CD8-positive, alpha-beta memory T cell (primary cell): ENCODE measurements at regions of chr3 and their contacts with region 1.

Region 1: GRCh38 chr3:195271116-195271858 is at the start of gene XXYLT1:
- DNase-seq: peak; percentile 82 to 91 (median 87)
- H3K4me3 ChIP-seq: peak within 1 kb of the TSS; percentile 85
- H3K4me3 Mint-ChIP-seq: peak within 1 kb of the TSS; percentile 86 to 96 (median 88)
- H3K27ac ChIP-seq: peak within 1 kb of the TSS; percentile 68
- H3K27ac Mint-ChIP-seq: peak within 1 kb of the TSS; percentile 58 to 95 (median 83)
- H3K4me1 ChIP-seq: peaks cover 18% of the 10 kb centered on the region
- H3K4me1 Mint-ChIP-seq: peaks cover 19 to 25% (median 25%) of the 10 kb centered on the region in 3 donors
- H3K27me3 ChIP-seq: no peaks in the 10 kb centered on the region
- H3K27me3 Mint-ChIP-seq: no peaks in the 10 kb centered on the region
- total RNA-seq, gene XXYLT1: 8.3 to 10.5 TPM

Region 2: DNA sequence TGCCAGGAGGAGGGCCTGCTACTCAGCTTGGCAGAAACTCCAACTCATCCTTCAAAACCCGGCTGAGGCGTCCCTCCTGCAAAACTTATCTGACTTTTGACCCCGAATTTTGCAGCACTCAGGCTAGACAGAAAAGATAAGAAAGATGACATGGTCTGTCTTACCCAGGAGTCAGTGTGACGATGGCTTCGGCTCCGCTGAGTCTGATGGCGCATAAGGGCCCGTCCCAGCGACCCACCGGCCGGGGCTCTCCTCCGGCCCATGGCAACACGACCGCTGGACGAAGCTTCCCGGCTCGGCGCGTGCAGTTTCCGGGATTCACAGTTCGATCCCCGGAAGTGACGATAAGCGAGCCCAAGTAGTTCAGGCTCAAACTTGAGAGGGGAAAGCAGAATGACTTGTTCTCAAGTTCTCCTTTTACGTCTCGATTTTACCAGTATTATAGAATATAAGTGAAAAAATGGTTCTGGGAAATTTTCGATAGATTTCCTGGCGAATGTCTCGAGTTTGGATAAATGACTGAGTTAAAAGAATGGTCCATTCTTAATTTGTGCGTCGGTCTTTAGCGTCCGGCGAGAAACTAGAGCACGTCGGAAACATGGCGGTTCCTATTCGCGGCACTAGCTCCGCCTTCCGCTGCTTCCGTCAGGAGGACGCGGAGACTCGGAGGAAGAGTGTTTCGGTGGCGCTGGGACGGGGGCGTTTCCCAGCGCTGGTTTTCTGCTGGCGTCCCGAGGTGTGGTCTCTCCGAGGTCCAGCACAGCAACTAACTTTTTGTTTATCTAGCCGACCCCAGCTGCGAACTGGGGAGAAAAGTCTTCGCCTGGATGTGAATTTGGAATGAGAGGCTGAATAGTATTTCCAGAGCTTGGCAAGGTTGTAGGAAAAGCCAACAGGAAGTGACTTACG is 599.1 kb before region 1 on chr3 and contains the start of gene LSG1:
- CTCF ChIA-PET with region 1: interaction called, 30 read pairs
- POLR2A ChIA-PET with region 1: interaction called, 4 read pairs
- DNase-seq: peak; percentile 80 to 92 (median 86)
- H3K4me3 ChIP-seq: peak within 1 kb of the TSS; percentile 86
- H3K4me3 Mint-ChIP-seq: peak within 1 kb of the TSS; percentile 94 to 99 (median 99)
- H3K27ac ChIP-seq: peak within 1 kb of the TSS; percentile 95
- H3K27ac Mint-ChIP-seq: peak within 1 kb of the TSS; percentile 91 to 99 (median 99)
- H3K4me1 ChIP-seq: peaks cover 19% of the 10 kb centered on the region
- H3K4me1 Mint-ChIP-seq: peaks cover 29 to 58% (median 55%) of the 10 kb centered on the region in 3 donors
- H3K27me3 ChIP-seq: no peaks in the 10 kb centered on the region
- H3K27me3 Mint-ChIP-seq: peaks cover 3 to 4% of the 10 kb centered on the region in 2 donors
- total RNA-seq, gene LSG1: 65.2 to 68.8 TPM

Region 3: GRCh38 chr3:195259475-195260279 is 11.6 kb before region 1 on chr3:
- CTCF ChIA-PET with region 1: interaction called, 54 read pairs
- POLR2A ChIA-PET with region 1: no interaction called
- DNase-seq: peak; percentile 88 to 95 (median 93)
- H3K4me3 ChIP-seq: no peak overlapping the region
- H3K4me3 Mint-ChIP-seq: peak overlapping the region; percentile 66 to 80 (median 75)
- H3K27ac ChIP-seq: peak overlapping the region; percentile 85
- H3K27ac Mint-ChIP-seq: peak overlapping the region; percentile 42 to 97 (median 93)
- H3K4me1 ChIP-seq: peaks cover 18% of the 10 kb centered on the region
- H3K4me1 Mint-ChIP-seq: peaks cover 11 to 23% (median 15%) of the 10 kb centered on the region in 3 donors
- H3K27me3 ChIP-seq: no peaks in the 10 kb centered on the region
- H3K27me3 Mint-ChIP-seq: no peaks in the 10 kb centered on the region

Region 4: DNA sequence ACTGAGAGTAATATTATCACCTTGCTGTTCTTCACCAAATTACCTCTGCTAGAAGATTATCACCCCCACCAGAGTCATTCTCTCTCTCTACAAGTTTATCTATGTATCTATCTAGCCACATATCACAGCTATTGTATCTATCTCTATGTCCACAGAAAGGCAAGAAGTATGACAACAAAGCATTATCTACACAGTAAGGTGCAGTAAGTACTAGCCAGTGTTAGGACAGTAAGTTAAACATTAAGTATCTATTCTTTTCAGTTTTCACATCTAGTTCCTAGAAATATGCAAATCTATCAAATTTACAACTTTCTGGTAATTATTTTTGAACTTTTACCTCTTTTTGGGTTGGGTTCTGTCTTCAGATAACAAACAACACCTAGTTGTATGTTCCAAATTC is 26.2 kb after region 1 on chr3:
- CTCF ChIA-PET with region 1: interaction called, 11 read pairs
- POLR2A ChIA-PET with region 1: no interaction called
- DNase-seq: no peak
- H3K4me3 ChIP-seq: no peak overlapping the region
- H3K4me3 Mint-ChIP-seq: no peak overlapping the region
- H3K27ac ChIP-seq: no peak overlapping the region
- H3K27ac Mint-ChIP-seq: peak overlapping the region in 6 of 8 donors; percentile 3 to 93 (median 63)
- H3K4me1 ChIP-seq: no peaks in the 10 kb centered on the region
- H3K4me1 Mint-ChIP-seq: peaks cover 3 to 9% (median 3%) of the 10 kb centered on the region in 3 donors
- H3K27me3 ChIP-seq: no peaks in the 10 kb centered on the region
- H3K27me3 Mint-ChIP-seq: no peaks in the 10 kb centered on the region

Region 5: DNA sequence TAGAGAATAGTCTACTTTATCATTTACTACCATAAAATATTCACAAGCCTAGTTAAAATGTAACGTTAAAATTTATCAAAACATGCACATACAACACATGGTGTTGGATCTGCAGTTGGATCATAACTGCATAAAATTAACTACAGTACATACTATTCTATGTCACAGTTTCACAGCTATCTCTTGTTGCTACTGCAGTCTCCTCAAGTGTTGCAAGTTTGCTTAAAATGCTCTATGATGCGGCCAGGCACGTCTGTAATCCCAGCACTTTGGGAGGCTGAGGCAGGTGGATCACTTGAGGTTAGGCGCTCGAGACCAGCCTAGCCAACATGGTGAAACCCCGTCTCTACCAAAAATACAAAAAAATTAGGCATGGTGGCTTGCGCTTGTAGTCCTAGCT is 261.5 kb after region 1 on chr3:
- CTCF ChIA-PET with region 1: interaction called, 13 read pairs
- POLR2A ChIA-PET with region 1: no interaction called
- DNase-seq: no peak
- H3K4me3 ChIP-seq: no peak overlapping the region
- H3K4me3 Mint-ChIP-seq: peak overlapping the region in 4 of 7 donors; percentile 13 to 70 (median 43)
- H3K27ac ChIP-seq: no peak overlapping the region
- H3K27ac Mint-ChIP-seq: peak overlapping the region in 5 of 8 donors; percentile 0 to 76 (median 47)
- H3K4me1 ChIP-seq: peaks cover 79% of the 10 kb centered on the region
- H3K4me1 Mint-ChIP-seq: peaks cover 75 to 94% (median 88%) of the 10 kb centered on the region in 3 donors
- H3K27me3 ChIP-seq: no peaks in the 10 kb centered on the region
- H3K27me3 Mint-ChIP-seq: no peaks in the 10 kb centered on the region

Region 6: GRCh38 chr3:195549931-195550519 is 278.7 kb after region 1 on chr3:
- CTCF ChIA-PET with region 1: interaction called, 24 read pairs
- POLR2A ChIA-PET with region 1: interaction called, 10 read pairs
- DNase-seq: peak; percentile 71 to 96 (median 88)
- H3K4me3 ChIP-seq: peak overlapping the region; percentile 74
- H3K4me3 Mint-ChIP-seq: peak overlapping the region; percentile 73 to 96 (median 85)
- H3K27ac ChIP-seq: peak overlapping the region; percentile 48
- H3K27ac Mint-ChIP-seq: peak overlapping the region; percentile 91 to 100 (median 97)
- H3K4me1 ChIP-seq: peaks cover 92% of the 10 kb centered on the region
- H3K4me1 Mint-ChIP-seq: peaks cover 74 to 87% (median 80%) of the 10 kb centered on the region in 3 donors
- H3K27me3 ChIP-seq: no peaks in the 10 kb centered on the region
- H3K27me3 Mint-ChIP-seq: no peaks in the 10 kb centered on the region